ENCODE measurements at regions of chr14 and their contacts with region 1.

Region 1: DNA sequence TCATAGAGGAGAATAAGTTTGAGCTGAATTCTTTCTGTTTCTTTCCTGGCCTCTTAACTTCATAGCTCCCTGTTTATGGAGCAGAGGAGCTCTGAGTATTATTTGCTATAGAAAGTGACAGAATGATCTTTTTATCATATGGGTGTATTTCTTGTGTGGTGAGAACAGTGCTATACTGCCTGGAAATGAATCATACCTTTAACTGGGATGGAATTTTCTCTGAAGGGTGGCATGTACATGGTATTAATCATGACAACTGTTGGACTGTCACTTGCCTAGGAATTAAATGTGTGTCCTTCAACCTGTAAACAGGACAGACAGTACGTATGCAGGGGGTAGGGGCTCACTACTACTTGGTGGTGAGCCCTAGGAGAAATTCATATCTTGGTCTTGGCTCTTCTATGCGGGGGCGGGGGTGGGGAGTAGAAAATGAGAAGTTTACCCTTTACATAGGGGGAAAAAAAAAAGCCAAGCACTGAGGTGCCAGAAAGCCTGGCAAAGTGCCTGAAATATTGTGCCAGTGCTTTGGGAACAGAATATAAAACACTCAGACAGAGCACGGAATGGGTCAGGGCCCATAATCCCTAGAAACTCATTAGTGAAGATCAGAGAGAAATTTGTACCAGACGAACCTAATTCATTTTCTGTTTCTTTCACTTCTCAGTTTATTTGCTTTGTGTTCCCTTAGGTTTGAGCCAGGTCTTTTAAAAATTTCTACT is 33.8 kb downstream of the ARMH4 start:
- DNase-seq: no peak
- ATAC-seq: peak in 1 of 8 donors; percentile 10
- H3K4me3 ChIP-seq: no peak overlapping the region
- H3K27ac ChIP-seq: no peak overlapping the region
- H3K4me1 ChIP-seq: no peaks in the 10 kb centered on the region
- H3K27me3 ChIP-seq: no peaks in the 10 kb centered on the region
- CTCF ChIP-seq: no peak

Region 2: GRCh38 chr14:57609192-57610075 is 508.8 kb before region 1 on chr14:
- intact Hi-C with region 1: no loop called
- DNase-seq: no peak
- ATAC-seq: no peak
- H3K4me3 ChIP-seq: no peak overlapping the region
- H3K27ac ChIP-seq: no peak overlapping the region
- H3K4me1 ChIP-seq: no peaks in the 10 kb centered on the region
- H3K27me3 ChIP-seq: peaks cover 0 to 4% (median 0%) of the 10 kb centered on the region in 7 donors
- CTCF ChIP-seq: no peak

Region 3: GRCh38 chr14:58160561-58160960 is 42.3 kb after region 1 on chr14:
- intact Hi-C with region 1: loop called in 1 of 10 experiments (anchors 2 kb)
- DNase-seq: no peak
- ATAC-seq: no peak
- H3K4me3 ChIP-seq: no peak overlapping the region
- H3K27ac ChIP-seq: no peak overlapping the region
- H3K4me1 ChIP-seq: no peaks in the 10 kb centered on the region
- H3K27me3 ChIP-seq: peaks cover 0 to 6% (median 0%) of the 10 kb centered on the region in 7 donors
- CTCF ChIP-seq: no peak

Region 4: DNA sequence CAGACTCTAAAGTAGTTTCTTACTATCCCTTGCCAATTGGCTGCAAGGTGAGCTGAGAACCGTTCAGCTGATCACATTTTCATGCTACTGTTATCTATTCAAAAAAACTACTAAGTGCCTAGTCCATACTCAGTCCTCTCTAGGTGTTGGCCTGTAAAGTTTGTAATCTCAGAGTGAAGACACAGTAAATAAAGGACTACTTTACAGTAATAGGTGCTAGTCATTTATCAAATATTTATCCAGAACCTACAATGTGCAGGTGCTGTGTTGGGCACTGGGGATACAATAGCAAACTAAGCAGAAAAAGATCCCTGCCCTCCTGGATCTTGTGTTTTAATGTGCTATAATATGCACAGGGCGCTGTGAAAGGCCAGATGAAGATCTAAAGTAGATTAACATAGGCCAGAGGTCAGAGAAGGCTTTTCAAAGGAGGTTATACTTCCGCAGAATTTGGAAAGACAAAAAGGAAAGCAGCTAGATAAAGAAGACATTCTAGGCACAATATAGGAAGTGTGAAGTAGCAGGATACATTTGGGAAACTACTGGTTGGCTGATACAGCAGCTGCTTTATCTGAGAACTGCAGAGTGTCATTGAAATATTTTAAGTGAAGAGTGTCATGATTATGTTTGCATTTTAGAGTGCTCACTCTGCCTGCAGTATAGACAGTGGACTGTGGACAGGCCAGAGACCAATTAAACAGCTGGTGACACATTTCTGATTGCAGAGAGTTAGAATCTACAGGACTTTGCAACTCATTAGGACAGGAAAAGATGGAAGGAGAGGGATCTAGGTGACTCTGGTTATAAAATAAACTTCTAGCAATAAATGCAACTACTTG is 73.7 kb after region 1 on chr14:
- intact Hi-C with region 1: no loop called
- DNase-seq: no peak
- ATAC-seq: peak in 1 of 8 donors; percentile 24
- H3K4me3 ChIP-seq: no peak overlapping the region
- H3K27ac ChIP-seq: no peak overlapping the region
- H3K4me1 ChIP-seq: peaks cover 0 to 10% (median 0%) of the 10 kb centered on the region in 9 donors
- H3K27me3 ChIP-seq: no peaks in the 10 kb centered on the region
- CTCF ChIP-seq: no peak

Region 5: GRCh38 chr14:58395812-58396788 is 277.8 kb after region 1 on chr14 and contains the start of gene TOMM20L:
- intact Hi-C with region 1: loop called in 1 of 10 experiments (anchors 10 kb)
- DNase-seq: peak; percentile 73 to 81
- ATAC-seq: peak; percentile 87 to 97 (median 93)
- H3K4me3 ChIP-seq: peak within 1 kb of the TSS; percentile 47 to 67 (median 56)
- H3K27ac ChIP-seq: peak within 1 kb of the TSS in 9 of 10 donors; percentile 60 to 87 (median 80)
- H3K4me1 ChIP-seq: peaks cover 0 to 13% (median 5%) of the 10 kb centered on the region in 9 donors
- H3K27me3 ChIP-seq: no peaks in the 10 kb centered on the region
- CTCF ChIP-seq: peak; percentile 76 to 97 (median 88)
- total RNA-seq, gene TOMM20L: not detected